ENCODE measurements at regions of chr10 and their contacts with region 1.

Region 1: DNA sequence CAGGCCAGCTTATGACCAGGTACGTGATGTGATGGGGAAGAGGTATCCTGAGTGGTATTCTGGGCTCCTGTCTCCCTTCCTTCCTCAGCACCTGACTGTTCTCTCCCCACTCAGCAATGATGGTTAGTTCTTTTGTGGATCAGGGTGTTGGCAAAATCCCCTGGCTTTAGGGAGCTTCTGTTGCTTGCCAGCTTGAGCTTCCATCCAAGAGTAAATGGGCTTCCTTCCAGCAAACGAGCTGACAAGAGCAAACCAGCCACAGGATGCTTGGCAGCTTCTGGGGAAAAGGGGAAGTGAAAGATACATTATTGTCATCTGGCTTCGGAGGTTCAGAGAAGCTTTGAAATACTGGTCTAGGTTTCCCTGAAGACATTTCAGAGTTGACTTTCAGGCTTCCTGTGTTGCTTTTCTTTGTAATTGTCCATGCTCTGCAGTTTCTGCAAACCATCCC is 5.2 kb downstream of the DUSP5 start:
- DNase-seq: peak; percentile 57
- CTCF ChIP-seq: no peak

Region 2: DNA sequence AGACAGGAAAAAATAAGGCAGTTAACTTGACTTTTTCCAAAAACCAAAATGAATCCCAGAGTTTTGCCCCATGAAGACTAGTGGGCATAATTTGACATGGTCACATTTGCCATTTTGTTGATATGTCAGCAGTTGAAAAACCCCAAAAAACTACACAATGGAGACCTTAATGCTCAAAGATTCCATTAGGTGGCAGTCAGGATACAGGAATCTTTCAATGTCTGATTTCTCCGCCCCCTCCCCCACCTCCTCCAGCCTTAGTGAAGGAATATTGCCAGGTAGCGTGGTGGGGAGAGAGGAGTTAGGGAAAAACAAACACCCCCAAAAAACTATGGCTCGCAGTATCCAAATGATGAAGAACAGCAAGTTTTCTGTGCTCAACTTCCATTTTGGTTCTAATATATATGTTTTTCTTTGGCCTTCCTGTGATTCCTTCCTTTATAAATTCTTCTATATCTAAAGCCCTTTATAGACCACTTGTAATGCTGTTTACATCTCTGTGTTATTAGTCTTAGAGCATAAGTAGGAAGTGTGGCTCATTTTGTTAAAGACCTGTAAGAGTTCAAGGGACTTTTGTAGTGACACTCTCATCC is 191.4 kb before region 1 on chr10:
- CTCF ChIA-PET with region 1: interaction called, 11 read pairs
- POLR2A ChIA-PET with region 1: no interaction called
- DNase-seq: peak; percentile 41
- CTCF ChIP-seq: peak; percentile 60

Region 3: GRCh38 chr10:110530131-110530831 is 27.4 kb after region 1 on chr10:
- CTCF ChIA-PET with region 1: no interaction called
- POLR2A ChIA-PET with region 1: no interaction called
- DNase-seq: no peak
- CTCF ChIP-seq: no peak